Right ventricle myocardium inferior (tissue), 1 donor: ENCODE measurements at regions of chr5 and their contacts with region 1.

Region 1: GRCh38 chr5:80191991-80192398 is 63.9 kb downstream of the SERINC5 start:
- DNase-seq: no peak
- ATAC-seq: peak; percentile 71

Region 2: DNA sequence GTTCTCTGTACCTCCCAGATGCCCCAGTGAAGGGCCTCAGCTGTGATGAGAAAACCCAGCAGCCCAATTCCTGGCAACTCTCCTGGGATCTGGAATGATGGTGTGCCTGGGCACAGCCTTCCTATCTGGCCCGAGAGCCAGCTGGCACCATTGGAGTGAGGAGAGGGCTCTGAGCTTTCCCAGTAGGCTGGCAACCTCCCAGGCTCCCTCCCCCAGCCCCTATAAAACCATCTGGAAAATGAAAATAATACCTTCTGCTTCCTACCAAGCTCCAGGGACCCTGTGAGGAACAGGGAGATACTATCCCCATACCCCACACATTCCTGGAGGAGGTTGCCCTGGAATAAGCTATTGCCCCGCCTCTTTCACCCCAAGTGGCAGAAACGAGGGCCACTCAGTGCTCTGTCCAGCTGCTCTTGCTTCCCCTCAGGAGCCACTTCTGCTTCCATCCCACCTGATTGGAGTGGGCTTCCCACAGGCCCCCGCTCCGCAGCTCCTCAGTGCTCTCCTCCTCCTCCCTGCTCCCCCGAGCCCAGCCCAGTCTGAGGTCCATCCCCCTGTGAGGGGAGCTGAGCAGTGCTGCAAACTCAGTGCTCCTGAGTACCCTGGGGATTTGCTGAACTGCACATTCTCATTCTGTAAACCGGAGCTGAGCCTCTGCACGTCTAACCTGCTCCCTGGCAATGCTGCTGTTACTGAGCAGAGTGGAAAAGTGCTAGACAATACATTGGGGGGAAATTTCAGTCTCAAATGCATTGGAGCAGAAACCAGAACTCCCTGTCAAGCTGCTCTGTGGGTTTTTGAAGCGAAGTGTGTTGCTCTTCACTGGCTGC is 82.1 kb before region 1 on chr5:
- intact Hi-C with region 1: loop called (anchors 10 kb)
- DNase-seq: no peak
- ATAC-seq: peak; percentile 93

Region 3: GRCh38 chr5:80141147-80141671 is 50.8 kb before region 1 on chr5:
- intact Hi-C with region 1: loop called (anchors 5 kb)
- DNase-seq: peak; percentile 94
- ATAC-seq: peak; percentile 98

Region 4: GRCh38 chr5:80216753-80217596 is 25.0 kb after region 1 on chr5:
- intact Hi-C with region 1: loop called (anchors 2 kb)
- DNase-seq: peak; percentile 78
- ATAC-seq: peak; percentile 90

Region 5: GRCh38 chr5:80255732-80256479 is 63.9 kb after region 1 on chr5 and contains the start of gene SERINC5:
- intact Hi-C with region 1: loop called (anchors 1 kb)
- DNase-seq: peak; percentile 94
- ATAC-seq: peak; percentile 93
- total RNA-seq, gene SERINC5: 14.5 TPM

Region 6: DNA sequence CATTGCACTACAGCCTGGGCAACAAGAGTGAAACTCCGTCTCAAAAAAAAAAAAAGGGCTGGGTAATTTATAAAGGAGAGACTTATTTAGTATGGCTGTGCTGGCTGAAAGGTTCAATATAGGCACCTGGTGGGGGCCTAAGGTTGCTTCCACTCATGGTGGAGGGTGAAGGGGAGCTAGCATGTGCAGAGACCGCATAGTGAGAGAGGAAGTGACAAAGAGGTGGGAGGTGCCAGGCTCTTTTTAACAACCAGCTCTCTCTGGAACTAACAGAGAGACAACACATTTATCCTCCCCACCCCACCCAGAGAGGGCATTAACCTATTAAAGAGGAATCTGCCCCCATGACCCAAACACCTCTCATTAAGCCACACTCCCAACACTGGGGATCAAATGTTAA is 92.7 kb after region 1 on chr5:
- intact Hi-C with region 1: no loop called
- DNase-seq: no peak
- ATAC-seq: no peak